Uterus (tissue), 4 donors: ENCODE measurements at regions of chr19 and their contacts with region 1.

Region 1: DNA sequence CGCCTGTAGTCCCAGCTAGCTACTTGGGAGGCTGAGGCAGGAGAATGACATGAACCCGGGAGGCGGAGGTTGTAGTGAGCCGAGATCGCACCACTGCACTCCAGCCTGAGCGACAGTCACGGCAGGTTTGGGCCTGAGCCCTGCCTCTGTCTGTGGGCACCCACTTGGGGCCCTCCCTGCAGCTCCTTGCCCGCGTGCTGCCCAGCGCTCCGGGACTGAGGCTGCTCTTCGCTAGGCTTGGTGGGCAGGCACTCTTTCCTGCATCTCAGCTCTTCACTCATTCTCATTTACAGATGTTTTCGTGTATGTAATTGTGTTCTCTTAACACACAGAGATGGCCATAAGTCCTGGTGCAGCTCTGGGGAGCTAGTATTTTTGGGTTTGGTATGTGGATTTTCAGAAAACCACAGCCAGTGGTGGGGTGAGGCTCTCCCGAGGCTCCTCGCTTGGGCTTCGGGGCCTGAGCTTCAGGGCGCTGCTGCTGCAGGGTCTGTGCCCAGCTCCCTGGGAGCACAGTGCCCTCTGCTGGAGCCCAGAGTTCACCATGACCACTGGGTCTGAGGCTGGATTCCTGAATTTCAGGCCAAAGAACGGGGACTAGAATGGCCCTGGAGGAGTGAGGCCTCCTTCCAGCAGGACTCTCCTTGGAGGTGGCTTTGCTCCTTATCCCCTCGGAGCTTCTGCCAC is 15.2 kb downstream of the UPF1 start:
- DNase-seq: peak; percentile 78 to 82
- H3K4me3 ChIP-seq: no peak overlapping the region
- H3K27ac ChIP-seq: peak overlapping the region; percentile 75 to 84
- H3K4me1 ChIP-seq: peaks cover 33 to 54% of the 10 kb centered on the region in 2 donors
- H3K27me3 ChIP-seq: no peaks in the 10 kb centered on the region
- CTCF ChIP-seq: peak; percentile 81 to 91 (median 86)
- POLR2A ChIP-seq: no peak

Region 2: GRCh38 chr19:18450931-18451845 is 395.8 kb before region 1 on chr19:
- intact Hi-C with region 1: loop called (anchors 10 kb)
- DNase-seq: peak; percentile 89 to 90
- H3K4me3 ChIP-seq: no peak overlapping the region
- H3K27ac ChIP-seq: peak overlapping the region in 1 of 2 donors; percentile 2
- H3K4me1 ChIP-seq: peaks cover 0 to 4% of the 10 kb centered on the region in 2 donors
- H3K27me3 ChIP-seq: no peaks in the 10 kb centered on the region
- CTCF ChIP-seq: peak; percentile 96 to 97 (median 97)
- POLR2A ChIP-seq: no peak

Region 3: DNA sequence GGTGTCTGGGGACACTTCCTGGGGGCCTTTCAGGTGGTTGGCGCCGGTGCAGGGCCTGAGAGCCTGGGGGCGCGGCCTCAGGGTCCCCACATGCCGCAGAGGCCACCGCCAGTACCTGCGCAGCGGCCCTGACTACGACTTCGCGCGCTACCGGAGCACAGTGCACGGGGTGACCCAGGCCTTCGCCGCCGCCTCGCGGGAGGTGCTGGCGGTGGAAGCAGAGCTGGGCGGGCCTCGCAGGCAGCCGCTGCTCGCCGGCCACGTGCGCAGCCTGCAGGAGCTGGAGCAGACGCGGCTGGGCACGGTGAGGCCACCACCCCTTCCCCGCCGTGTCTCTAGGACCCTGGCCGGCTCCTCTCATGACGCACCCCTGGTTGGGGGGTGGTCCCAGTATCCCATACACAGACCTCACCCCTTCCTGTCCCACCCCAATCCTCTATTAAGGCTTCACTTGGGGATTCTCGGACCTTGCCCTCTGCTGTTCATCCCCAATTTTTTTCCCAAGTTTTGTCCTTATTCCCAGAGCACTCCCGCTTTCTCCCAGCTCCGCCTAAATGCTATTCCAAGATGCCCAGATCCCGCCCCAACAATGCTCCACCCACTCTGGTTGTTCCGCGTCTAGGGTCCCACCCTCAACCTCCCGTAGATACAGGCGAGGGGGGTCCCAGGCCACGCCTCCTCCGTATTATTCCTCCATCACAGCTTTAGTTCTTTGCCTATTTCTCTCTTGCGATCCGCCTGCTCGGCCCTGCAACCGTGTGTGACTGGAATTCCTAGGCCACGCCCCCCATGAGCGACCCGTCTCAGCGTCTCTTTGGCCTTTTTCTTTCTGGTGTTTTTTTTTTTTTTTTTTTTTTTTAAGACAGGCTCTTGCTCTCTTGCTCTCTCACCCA is 257.4 kb before region 1 on chr19:
- intact Hi-C with region 1: loop called (anchors 5 kb)
- DNase-seq: peak; percentile 59 to 68
- H3K4me3 ChIP-seq: peak overlapping the region; percentile 48 to 84
- H3K27ac ChIP-seq: peak overlapping the region; percentile 88 to 89
- H3K4me1 ChIP-seq: peaks cover 1 to 10% of the 10 kb centered on the region in 2 donors
- H3K27me3 ChIP-seq: no peaks in the 10 kb centered on the region
- CTCF ChIP-seq: peak in 2 of 4 experiments; percentile 22 to 35
- POLR2A ChIP-seq: no peak

Region 4: GRCh38 chr19:18762125-18763023 is 84.6 kb before region 1 on chr19:
- intact Hi-C with region 1: no loop called
- DNase-seq: peak; percentile 65 to 68
- H3K4me3 ChIP-seq: no peak overlapping the region
- H3K27ac ChIP-seq: peak overlapping the region in 1 of 2 donors; percentile 59
- H3K4me1 ChIP-seq: peaks cover 0 to 15% of the 10 kb centered on the region in 2 donors
- H3K27me3 ChIP-seq: no peaks in the 10 kb centered on the region
- CTCF ChIP-seq: no peak
- POLR2A ChIP-seq: no peak

Region 5: GRCh38 chr19:18798384-18799352 is 48.3 kb before region 1 on chr19:
- intact Hi-C with region 1: no loop called
- DNase-seq: no peak
- H3K4me3 ChIP-seq: no peak overlapping the region
- H3K27ac ChIP-seq: no peak overlapping the region
- H3K4me1 ChIP-seq: no peaks in the 10 kb centered on the region
- H3K27me3 ChIP-seq: no peaks in the 10 kb centered on the region
- CTCF ChIP-seq: no peak
- POLR2A ChIP-seq: no peak

Region 6: GRCh38 chr19:18898081-18898606 is 51.1 kb after region 1 on chr19:
- intact Hi-C with region 1: no loop called
- DNase-seq: no peak
- H3K4me3 ChIP-seq: no peak overlapping the region
- H3K27ac ChIP-seq: no peak overlapping the region
- H3K4me1 ChIP-seq: peaks cover 0 to 23% of the 10 kb centered on the region in 2 donors
- H3K27me3 ChIP-seq: peaks cover 0 to 6% of the 10 kb centered on the region in 2 donors
- CTCF ChIP-seq: no peak
- POLR2A ChIP-seq: no peak